ENCODE measurements at regions of chr7 and their contacts with region 1.

Region 1: DNA sequence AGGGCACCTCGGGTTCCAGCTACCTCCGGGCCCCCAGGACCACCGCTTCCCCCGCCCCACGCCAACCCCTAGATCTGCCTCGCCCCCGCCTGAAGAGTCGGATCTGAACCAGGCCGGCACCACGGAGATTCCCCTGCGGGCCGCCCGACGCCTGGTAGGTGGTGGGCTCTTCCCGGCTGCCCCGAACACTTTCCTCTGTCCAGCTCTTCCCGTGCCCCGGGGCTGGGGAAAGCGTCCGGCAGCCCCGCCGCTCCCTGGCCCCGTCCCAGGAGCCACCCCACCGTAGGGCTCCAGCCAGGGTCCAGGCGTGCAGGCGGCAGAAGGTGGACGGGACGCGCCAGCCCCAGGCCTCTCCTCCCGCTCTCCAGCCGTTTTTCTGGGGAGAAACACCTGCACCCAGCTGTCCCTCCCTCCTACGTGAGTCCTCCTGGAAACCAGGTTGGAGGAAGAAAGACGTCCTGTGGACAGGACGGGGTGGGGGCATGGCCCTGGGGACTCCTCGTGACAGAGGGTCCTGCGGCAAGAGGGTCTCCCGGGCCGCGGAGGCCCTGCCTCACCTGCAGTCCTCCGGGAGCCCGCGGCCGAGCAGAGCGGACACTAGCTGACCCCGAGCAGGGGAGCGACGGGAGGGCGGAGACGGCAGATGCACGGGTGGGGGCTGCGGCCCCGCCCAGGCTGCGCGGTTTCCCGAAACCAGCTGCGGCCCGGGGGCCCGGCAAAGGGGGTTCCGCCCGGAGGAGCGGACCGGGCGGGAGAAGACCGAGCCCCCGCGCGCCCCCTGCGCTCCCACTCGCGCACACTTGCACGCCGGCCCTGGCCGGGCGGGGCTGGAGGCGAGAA is at the start of gene TMEM176B:
- DNase-seq: no peak
- H3K4me3 Mint-ChIP-seq: peak within 1 kb of the TSS; percentile 55
- H3K27ac Mint-ChIP-seq: no peak within 1 kb of the TSS
- H3K4me1 Mint-ChIP-seq: peaks cover 5% of the 10 kb centered on the region
- H3K27me3 Mint-ChIP-seq: peaks cover 41% of the 10 kb centered on the region
- total RNA-seq, gene TMEM176B: not detected

Region 2: DNA sequence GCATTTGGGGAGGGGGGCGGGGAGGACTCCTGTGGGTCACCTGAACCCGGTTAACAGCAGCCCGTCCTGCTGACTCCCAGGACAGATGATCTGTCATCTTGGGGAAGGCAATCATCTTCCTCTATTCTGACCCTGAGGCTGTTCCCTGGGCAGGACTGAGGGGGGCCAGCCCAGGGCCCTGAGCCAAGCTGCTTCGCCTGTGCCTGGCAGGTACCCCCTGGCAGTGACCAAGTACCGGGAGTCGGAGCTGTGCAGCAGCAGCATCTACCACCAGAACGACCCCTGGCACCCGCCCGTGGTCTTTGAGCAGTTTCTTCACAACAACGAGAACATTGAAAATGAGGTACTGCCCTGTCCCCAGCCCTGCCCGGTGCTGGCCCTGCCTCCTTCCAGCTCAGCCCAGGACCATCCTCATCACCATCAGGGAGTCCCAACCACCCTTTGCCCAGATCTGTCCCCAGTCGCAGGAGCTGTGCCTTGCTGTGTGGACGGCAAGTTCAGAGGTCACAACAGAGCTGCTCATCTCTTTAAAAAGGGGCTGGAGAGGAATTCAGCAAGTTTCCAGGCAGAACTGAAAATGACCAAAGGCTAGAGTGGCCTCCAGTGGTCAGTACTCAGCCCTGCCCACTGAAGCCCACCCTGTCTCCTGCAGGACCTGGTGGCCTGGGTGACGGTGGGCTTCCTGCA is 60.5 kb after region 1 on chr7:
- CTCF ChIA-PET with region 1: no interaction called
- POLR2A ChIA-PET with region 1: no interaction called
- intact Hi-C with region 1: loop called (anchors 10 kb)
- DNase-seq: no peak
- H3K4me3 Mint-ChIP-seq: no peak overlapping the region
- H3K27ac Mint-ChIP-seq: no peak overlapping the region
- H3K4me1 Mint-ChIP-seq: no peaks in the 10 kb centered on the region
- H3K27me3 Mint-ChIP-seq: peaks cover 2% of the 10 kb centered on the region

Measured in activated CD4-positive, alpha-beta memory T cell treated with anti-CD3 and anti-CD28 coated beads for 36 hours (primary cell).